ENCODE measurements at regions of chr9 and their contacts with region 1.

Region 1: GRCh38 chr9:114487607-114488300 is 17.5 kb downstream of the WHRN start:
- DNase-seq: peak; percentile 38 to 88
- ATAC-seq: peak; percentile 84 to 88 (median 85)
- H3K4me3 ChIP-seq: no peak overlapping the region
- H3K4me3 Mint-ChIP-seq: no peak overlapping the region
- H3K27ac ChIP-seq: no peak overlapping the region
- H3K27ac Mint-ChIP-seq: peak overlapping the region in 1 of 2 donors; percentile 50
- H3K4me1 ChIP-seq: peaks cover 9% of the 10 kb centered on the region
- H3K4me1 Mint-ChIP-seq: peaks cover 0 to 14% of the 10 kb centered on the region in 2 donors
- H3K27me3 ChIP-seq: no peaks in the 10 kb centered on the region
- H3K27me3 Mint-ChIP-seq: peaks cover 0 to 4% of the 10 kb centered on the region in 2 donors
- CTCF ChIP-seq: peak; percentile 84

Region 2: GRCh38 chr9:114405294-114406034 is 82.3 kb before region 1 on chr9:
- intact Hi-C with region 1: loop called (anchors 5 kb)
- DNase-seq: peak; percentile 71 to 93
- ATAC-seq: peak; percentile 92 to 99 (median 99)
- H3K4me3 ChIP-seq: no peak overlapping the region
- H3K4me3 Mint-ChIP-seq: no peak overlapping the region
- H3K27ac ChIP-seq: no peak overlapping the region
- H3K27ac Mint-ChIP-seq: peak overlapping the region; percentile 23 to 25
- H3K4me1 ChIP-seq: peaks cover 7% of the 10 kb centered on the region
- H3K4me1 Mint-ChIP-seq: peaks cover 6 to 15% of the 10 kb centered on the region in 2 donors
- H3K27me3 ChIP-seq: no peaks in the 10 kb centered on the region
- H3K27me3 Mint-ChIP-seq: no peaks in the 10 kb centered on the region
- CTCF ChIP-seq: peak; percentile 78

Region 3: DNA sequence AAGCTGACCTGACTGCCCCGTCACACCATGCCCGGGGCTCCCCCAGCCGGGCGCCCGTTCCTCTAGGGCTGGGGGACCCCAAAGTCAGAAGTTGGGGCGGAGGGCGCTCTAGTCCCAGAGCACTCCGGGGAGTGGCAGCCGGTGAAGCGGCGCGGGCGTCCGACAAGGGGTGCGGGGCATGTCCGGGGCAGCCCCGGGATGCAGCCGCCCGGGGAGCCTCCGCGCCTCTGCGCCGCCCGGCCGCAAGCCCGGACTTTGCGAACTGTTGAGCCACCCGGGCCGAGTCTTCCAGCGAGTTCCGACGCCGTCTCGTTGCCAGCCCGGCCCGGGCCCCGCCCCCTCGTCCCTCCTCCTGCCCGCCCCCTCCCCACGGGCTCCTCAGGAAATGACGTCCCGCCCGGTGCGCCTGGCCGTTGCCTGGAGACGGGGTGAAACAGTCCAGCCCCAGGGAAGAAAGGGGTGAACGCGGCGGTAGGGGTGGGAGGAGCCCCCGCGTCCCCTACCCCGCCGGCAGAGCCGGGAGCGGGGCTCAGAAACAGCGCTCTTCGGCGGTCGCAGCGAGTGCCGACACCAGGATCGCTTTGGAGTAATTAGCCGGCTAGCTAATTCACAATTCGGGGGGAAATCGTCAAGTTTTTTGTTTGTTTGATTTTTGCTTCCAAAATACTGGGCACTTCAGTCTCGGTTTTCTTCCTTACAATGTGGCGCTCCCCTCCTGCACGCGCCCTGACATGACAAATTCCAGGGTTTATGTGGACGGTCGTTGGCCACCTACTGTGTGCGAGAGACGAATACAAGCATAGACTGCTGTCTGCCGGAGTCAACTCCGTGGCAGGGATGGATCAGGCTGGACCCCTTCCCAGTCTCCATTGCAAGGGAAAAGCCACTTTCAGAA is 17.7 kb after region 1 on chr9 and contains the start of gene WHRN:
- intact Hi-C with region 1: loop called (anchors 1 kb)
- DNase-seq: peak; percentile 86 to 96
- ATAC-seq: peak; percentile 82 to 94 (median 89)
- H3K4me3 ChIP-seq: peak within 1 kb of the TSS; percentile 53
- H3K4me3 Mint-ChIP-seq: peak within 1 kb of the TSS; percentile 91
- H3K27ac ChIP-seq: peak within 1 kb of the TSS; percentile 29
- H3K27ac Mint-ChIP-seq: peak within 1 kb of the TSS; percentile 83 to 91
- H3K4me1 ChIP-seq: peaks cover 33% of the 10 kb centered on the region
- H3K4me1 Mint-ChIP-seq: peaks cover 25 to 28% of the 10 kb centered on the region in 2 donors
- H3K27me3 ChIP-seq: peaks cover 25% of the 10 kb centered on the region
- H3K27me3 Mint-ChIP-seq: peaks cover 37 to 44% of the 10 kb centered on the region in 2 donors
- CTCF ChIP-seq: no peak
- total RNA-seq, gene WHRN: 29.8 to 90.6 (median 36.8) TPM

Region 4: DNA sequence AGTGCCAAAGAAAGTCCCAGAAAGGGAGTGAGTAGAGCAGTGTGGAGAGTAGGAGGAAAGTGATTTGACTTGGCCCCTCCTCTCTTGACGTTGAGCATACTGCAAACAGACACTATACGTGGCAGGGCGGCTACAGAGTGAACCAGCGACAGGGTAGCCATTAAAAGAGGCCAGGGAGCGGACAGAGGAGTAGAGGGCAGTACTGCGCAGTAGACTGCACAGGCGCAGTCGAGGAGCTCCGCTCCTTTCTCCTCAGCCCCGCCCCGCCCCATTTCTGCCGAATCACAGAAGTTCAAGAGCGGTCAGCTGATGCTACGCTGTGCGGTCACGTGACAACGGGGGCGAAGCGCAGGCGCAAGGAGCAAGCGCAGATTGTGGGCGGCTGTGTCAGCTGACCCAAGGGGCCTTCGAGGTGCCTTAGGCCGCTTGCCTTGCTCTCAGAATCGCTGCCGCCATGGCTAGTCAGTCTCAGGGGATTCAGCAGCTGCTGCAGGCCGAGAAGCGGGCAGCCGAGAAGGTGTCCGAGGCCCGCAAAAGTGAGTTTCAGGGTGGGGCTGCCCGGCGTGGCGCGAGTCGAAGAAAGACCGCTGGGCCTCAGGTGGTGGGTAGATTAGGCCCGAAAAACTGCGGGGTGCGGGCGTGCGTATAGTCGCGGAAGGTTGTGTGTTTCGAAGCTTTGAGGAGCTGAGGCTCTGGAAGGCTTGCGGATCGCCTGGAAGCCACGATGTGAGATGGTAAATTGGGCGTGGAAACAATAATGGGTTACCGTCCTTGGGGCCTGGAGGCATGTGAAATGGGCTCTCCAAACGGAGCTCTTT is 99.8 kb after region 1 on chr9 and contains the start of gene ATP6V1G1:
- intact Hi-C with region 1: loop called (anchors 5 kb)
- DNase-seq: peak; percentile 98 to 99
- ATAC-seq: peak; percentile 95 to 99 (median 96)
- H3K4me3 ChIP-seq: peak within 1 kb of the TSS; percentile 95
- H3K4me3 Mint-ChIP-seq: peak within 1 kb of the TSS; percentile 99
- H3K27ac ChIP-seq: peak within 1 kb of the TSS; percentile 89
- H3K27ac Mint-ChIP-seq: peak within 1 kb of the TSS; percentile 98 to 99
- H3K4me1 ChIP-seq: peaks cover 42% of the 10 kb centered on the region
- H3K4me1 Mint-ChIP-seq: peaks cover 49 to 50% of the 10 kb centered on the region in 2 donors
- H3K27me3 ChIP-seq: no peaks in the 10 kb centered on the region
- H3K27me3 Mint-ChIP-seq: no peaks in the 10 kb centered on the region
- CTCF ChIP-seq: no peak
- total RNA-seq, gene ATP6V1G1: 83.8 to 101 (median 93.5) TPM

Region 5: GRCh38 chr9:114653556-114654159 is 165.9 kb after region 1 on chr9:
- intact Hi-C with region 1: loop called (anchors 1 kb)
- DNase-seq: peak; percentile 70 to 90
- ATAC-seq: peak; percentile 89 to 99 (median 97)
- H3K4me3 ChIP-seq: no peak overlapping the region
- H3K4me3 Mint-ChIP-seq: no peak overlapping the region
- H3K27ac ChIP-seq: no peak overlapping the region
- H3K27ac Mint-ChIP-seq: no peak overlapping the region
- H3K4me1 ChIP-seq: peaks cover 4% of the 10 kb centered on the region
- H3K4me1 Mint-ChIP-seq: peaks cover 6 to 18% of the 10 kb centered on the region in 2 donors
- H3K27me3 ChIP-seq: no peaks in the 10 kb centered on the region
- H3K27me3 Mint-ChIP-seq: peaks cover 0 to 3% of the 10 kb centered on the region in 2 donors
- CTCF ChIP-seq: peak; percentile 81

Region 6: DNA sequence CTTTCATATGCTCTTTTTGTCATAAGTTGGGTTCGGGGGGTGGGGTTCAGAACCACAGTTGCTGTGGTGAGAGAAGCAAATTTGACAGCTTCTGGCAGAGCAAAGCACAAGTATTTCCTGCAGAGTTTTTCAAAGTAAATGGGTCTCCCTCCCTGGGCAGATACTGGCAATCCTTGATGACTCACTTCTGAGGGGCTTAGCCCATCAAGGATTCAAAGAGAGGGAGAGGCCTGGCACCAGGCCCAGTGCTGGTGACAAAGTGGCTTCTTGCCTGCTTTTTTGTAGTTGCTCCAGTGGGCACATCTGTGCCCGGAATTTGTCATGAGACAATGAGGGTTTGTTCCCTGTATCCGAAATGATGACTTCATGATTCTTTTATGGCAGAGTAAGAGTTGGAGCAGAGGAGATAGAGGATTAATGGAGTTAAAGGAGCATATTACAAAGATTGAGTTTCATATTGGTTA is 676.8 kb after region 1 on chr9:
- intact Hi-C with region 1: no loop called
- DNase-seq: no peak
- ATAC-seq: no peak
- H3K4me3 ChIP-seq: no peak overlapping the region
- H3K4me3 Mint-ChIP-seq: no peak overlapping the region
- H3K27ac ChIP-seq: no peak overlapping the region
- H3K27ac Mint-ChIP-seq: no peak overlapping the region
- H3K4me1 ChIP-seq: no peaks in the 10 kb centered on the region
- H3K4me1 Mint-ChIP-seq: no peaks in the 10 kb centered on the region
- H3K27me3 ChIP-seq: no peaks in the 10 kb centered on the region
- H3K27me3 Mint-ChIP-seq: peaks cover 0 to 8% of the 10 kb centered on the region in 2 donors
- CTCF ChIP-seq: no peak